ENCODE measurements at regions of chr6 and their contacts with region 1.

Region 1: DNA sequence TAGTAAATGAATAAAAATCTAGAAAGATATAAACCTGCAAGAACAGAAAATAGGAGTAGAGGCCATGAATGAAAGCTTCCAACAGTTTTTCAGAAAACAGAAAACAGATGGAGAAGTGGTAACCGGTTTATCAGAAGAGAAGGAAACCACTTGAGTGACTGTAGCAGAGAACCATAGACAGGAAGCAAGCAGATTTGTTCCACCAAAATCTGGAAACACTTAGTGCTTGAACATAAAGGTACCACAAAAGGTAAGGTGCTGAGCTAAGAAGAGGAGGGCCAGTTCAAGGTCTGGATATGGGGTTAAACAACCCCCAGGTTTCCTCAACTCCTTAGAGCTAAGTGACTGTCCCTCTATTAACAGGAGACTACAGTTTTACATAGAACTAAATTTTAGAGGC is 9.2 kb upstream of the KIAA0319 start:
- DNase-seq: no peak
- H3K4me3 ChIP-seq: no peak overlapping the region
- H3K27ac ChIP-seq: no peak overlapping the region
- H3K4me1 ChIP-seq: no peaks in the 10 kb centered on the region
- H3K27me3 ChIP-seq: no peaks in the 10 kb centered on the region
- CTCF ChIP-seq: no peak
- EP300 ChIP-seq: no peak
- POLR2A ChIP-seq: no peak

Region 2: DNA sequence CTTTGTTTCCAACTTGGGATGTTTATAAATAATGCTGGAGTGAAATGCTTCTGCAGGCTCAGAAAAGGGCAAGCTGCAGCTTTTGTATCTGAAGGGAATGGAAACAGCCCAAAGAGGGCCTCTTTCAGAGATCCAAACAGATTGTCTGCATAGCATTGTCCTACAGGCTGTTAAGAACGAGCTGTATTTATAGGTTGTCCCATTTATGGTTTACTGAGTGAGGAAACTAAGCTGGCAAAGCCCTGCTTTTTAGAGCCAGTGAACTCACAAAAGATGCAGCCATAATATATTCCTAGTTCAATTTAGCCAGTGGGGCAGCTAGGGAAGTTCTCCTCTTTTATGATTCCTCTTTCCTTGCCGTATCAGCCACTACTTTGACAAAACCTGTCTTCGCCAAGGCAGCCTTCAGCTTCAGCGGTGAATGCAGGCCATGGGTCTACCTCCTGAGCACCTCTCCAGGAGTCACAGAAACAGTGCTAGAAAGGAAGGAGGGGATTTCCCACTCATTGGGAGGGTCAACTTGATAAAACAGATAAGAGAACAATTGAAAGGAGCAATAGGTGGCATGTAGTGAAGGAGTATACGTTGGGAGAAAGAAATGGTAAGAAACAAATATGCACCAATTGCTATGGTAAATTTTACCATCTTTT is 24.2 kb before region 1 on chr6:
- intact Hi-C with region 1: loop called (anchors 1 kb)
- DNase-seq: no peak
- H3K4me3 ChIP-seq: no peak overlapping the region
- H3K27ac ChIP-seq: no peak overlapping the region
- H3K4me1 ChIP-seq: no peaks in the 10 kb centered on the region
- H3K27me3 ChIP-seq: peaks cover 0 to 4% (median 0%) of the 10 kb centered on the region in 3 donors
- CTCF ChIP-seq: no peak
- EP300 ChIP-seq: no peak
- POLR2A ChIP-seq: no peak

Region 3: DNA sequence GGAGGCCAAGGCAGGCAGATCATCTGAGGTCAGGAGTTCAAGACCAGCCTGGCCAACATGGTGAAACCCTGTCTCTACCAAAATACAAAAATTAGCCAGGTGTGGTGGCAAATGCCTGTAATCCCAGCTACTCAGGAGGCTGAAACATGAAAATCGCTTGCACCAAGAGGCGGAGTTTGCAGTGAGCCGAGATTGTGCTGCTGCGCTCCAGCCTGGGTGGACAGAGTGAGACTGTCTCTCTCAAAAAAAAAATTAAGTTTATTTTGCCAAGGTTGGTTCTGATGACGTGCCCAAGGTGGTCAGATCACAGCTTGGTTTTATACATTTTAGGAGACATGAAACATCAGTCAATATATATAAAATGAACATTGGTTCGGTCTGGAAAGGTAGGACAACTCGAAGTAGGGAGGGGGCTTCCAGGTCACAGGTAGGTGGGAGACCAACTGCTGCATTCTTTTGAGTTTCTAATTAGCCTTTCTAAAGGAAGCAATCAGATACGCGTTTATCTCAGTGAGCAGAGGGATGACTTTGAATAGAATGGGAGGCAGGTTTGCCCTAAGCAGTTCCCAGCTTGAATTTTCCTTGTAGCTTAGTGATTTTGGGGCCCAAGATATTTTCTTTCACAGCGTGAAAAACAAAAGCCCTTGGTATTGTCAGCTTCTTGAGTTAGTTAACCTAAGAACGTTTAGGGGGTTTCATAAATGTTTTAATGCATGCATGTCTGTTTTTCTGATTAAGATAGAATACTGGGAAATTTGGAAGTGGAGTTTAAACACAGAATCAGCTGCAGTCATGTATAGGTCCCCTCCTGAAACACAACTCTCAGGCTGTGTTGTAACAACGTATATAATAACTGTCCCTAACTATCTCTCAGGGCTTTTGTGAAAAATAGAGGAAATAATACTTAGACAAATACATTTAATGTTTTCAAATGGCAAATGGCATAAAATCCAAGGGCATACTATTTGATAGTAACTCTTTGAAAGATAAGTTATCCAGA is 28.4 kb after region 1 on chr6:
- intact Hi-C with region 1: no loop called
- DNase-seq: no peak
- H3K4me3 ChIP-seq: no peak overlapping the region
- H3K27ac ChIP-seq: no peak overlapping the region
- H3K4me1 ChIP-seq: no peaks in the 10 kb centered on the region
- H3K27me3 ChIP-seq: no peaks in the 10 kb centered on the region
- CTCF ChIP-seq: no peak
- EP300 ChIP-seq: no peak
- POLR2A ChIP-seq: no peak

Region 4: GRCh38 chr6:24867104-24867703 is 212.0 kb after region 1 on chr6:
- intact Hi-C with region 1: no loop called
- DNase-seq: no peak
- H3K4me3 ChIP-seq: no peak overlapping the region
- H3K27ac ChIP-seq: no peak overlapping the region
- H3K4me1 ChIP-seq: no peaks in the 10 kb centered on the region
- H3K27me3 ChIP-seq: no peaks in the 10 kb centered on the region
- CTCF ChIP-seq: no peak
- EP300 ChIP-seq: no peak
- POLR2A ChIP-seq: no peak

Measured in sigmoid colon (tissue), 7 donors.